ENCODE measurements at regions of chr14 and their contacts with region 1.

Region 1: GRCh38 chr14:96844857-96845570 is 47.8 kb downstream of the VRK1 start:
- DNase-seq: no peak
- ATAC-seq: no peak
- H3K4me3 ChIP-seq: no peak overlapping the region
- H3K4me3 Mint-ChIP-seq: no peak overlapping the region
- H3K27ac ChIP-seq: no peak overlapping the region
- H3K27ac Mint-ChIP-seq: no peak overlapping the region
- H3K4me1 ChIP-seq: no peaks in the 10 kb centered on the region
- H3K4me1 Mint-ChIP-seq: peaks cover 0 to 2% (median 0%) of the 10 kb centered on the region in 3 donors
- H3K27me3 ChIP-seq: no peaks in the 10 kb centered on the region
- H3K27me3 Mint-ChIP-seq: no peaks in the 10 kb centered on the region

Region 2: GRCh38 chr14:96811265-96811664 is 33.7 kb before region 1 on chr14:
- CTCF ChIA-PET with region 1: no interaction called
- POLR2A ChIA-PET with region 1: interaction called in 1 of 2 experiments, 11 read pairs
- DNase-seq: no peak
- ATAC-seq: no peak
- H3K4me3 ChIP-seq: no peak overlapping the region
- H3K4me3 Mint-ChIP-seq: no peak overlapping the region
- H3K27ac ChIP-seq: no peak overlapping the region
- H3K27ac Mint-ChIP-seq: no peak overlapping the region
- H3K4me1 ChIP-seq: peaks cover 0 to 1% of the 10 kb centered on the region in 2 experiments
- H3K4me1 Mint-ChIP-seq: peaks cover 51 to 62% (median 53%) of the 10 kb centered on the region in 3 donors
- H3K27me3 ChIP-seq: no peaks in the 10 kb centered on the region
- H3K27me3 Mint-ChIP-seq: no peaks in the 10 kb centered on the region

Measured in T-cell (primary cell).